ENCODE measurements at regions of chrX and their contacts with region 1.

Region 1: DNA sequence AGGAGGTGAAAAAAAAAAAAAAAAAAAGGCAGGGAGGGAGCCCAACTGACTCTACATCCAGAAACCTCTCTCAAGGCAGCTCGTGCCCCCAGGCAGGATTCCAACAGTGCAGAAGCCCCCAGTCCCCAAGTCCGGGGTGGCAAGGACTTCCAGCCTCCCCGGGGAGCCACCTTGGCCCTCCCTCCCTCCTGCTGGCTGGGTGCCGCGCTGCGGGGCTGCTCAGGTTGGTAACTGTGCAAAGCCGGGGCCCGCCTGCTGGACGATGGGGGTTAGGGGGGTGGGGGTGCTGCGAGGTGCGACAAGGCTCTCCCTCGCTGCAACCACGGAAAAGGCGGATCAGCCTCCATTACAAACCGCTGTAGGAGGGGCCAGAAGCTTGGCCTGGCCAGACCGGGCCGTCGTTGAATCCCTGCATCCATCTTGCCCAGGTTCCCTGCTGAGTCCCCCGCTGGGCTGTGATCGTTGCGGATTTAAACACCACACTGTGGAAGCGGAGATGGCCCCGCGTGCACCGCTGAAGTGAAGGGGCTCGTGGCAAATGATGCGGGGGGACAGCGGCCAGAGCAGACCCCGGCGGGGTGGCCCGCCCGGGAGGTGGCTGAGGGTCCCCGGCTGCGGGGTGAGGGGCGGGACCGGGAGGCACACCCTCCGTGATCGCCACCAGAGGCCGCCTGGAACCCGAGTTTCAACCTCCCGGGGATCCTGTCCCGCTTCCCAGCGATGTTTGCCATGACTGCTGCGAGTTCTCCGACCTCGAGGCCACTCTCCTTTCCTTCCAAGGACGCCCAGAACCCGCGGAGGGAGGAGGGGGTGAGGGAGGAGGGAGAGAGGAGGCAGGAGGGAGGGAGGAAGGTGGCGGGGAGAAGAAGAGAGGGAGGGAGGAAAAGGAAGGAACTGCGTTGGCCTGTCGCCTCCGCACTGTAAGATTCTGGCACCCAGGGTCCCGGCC is 58.0 kb upstream of the DDX3X start:
- DNase-seq: peak; percentile 62
- H3K4me3 ChIP-seq: peak overlapping the region; percentile 25 to 57 (median 32)
- H3K27ac ChIP-seq: peak overlapping the region; percentile 40 to 74 (median 70)
- H3K4me1 ChIP-seq: peaks cover 4 to 12% (median 7%) of the 10 kb centered on the region in 4 donors
- H3K27me3 ChIP-seq: no peaks in the 10 kb centered on the region
- CTCF ChIP-seq: peak; percentile 14 to 41 (median 34)
- EP300 ChIP-seq: no peak
- POLR2A ChIP-seq: no peak

Region 2: DNA sequence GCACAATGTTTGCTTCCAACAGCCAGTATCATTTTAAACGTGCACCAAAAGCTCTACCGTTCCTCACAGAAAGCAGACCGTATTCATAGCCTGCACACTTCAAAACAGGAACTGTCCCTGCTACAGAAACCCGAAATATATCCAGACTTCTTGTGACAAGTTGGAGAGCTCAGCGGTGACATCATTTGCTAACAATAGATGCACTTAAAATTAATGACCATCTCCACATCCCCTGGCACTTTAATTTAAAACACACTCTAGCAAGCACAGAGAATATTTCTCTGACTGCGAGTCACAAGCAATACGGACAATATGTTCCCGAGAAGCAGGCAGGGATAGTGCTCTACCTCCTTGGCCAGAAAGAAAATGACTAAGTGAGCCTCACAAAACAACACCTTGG is 173.7 kb after region 1 on chrX:
- in situ Hi-C with region 1: no loop called
- intact Hi-C with region 1: no loop called
- DNase-seq: no peak
- H3K4me3 ChIP-seq: no peak overlapping the region
- H3K27ac ChIP-seq: peak overlapping the region; percentile 13 to 59 (median 34)
- H3K4me1 ChIP-seq: peaks cover 0 to 3% (median 0%) of the 10 kb centered on the region in 4 donors
- H3K27me3 ChIP-seq: no peaks in the 10 kb centered on the region
- CTCF ChIP-seq: no peak
- EP300 ChIP-seq: no peak
- POLR2A ChIP-seq: no peak

Region 3: DNA sequence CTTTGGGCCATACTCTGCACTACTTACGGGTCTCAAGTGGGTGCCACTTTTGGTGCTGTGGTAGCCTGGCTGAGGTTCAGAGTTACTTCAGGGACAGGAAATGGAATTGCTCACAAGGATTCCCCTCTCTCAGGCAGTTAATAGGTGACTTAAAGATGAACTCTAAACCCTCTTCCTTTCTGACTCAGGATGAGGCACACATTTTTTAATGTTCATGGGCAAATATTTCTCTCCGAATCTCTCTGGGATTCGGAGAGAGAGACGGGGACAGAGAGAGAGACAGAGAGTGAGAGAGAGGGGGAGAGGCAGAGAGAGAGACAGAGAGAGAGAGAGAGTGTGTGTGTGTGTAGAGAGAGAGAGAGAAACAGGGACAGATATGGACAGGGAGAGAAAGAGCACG is 251.0 kb after region 1 on chrX:
- in situ Hi-C with region 1: no loop called
- intact Hi-C with region 1: no loop called
- DNase-seq: no peak
- H3K4me3 ChIP-seq: no peak overlapping the region
- H3K27ac ChIP-seq: no peak overlapping the region
- H3K4me1 ChIP-seq: no peaks in the 10 kb centered on the region
- H3K27me3 ChIP-seq: no peaks in the 10 kb centered on the region
- CTCF ChIP-seq: no peak
- EP300 ChIP-seq: no peak
- POLR2A ChIP-seq: no peak

Region 4: GRCh38 chrX:41759817-41760216 is 483.9 kb after region 1 on chrX:
- in situ Hi-C with region 1: loop called in 1 of 4 experiments (anchors 25 kb)
- intact Hi-C with region 1: no loop called
- DNase-seq: no peak
- H3K4me3 ChIP-seq: no peak overlapping the region
- H3K27ac ChIP-seq: no peak overlapping the region
- H3K4me1 ChIP-seq: no peaks in the 10 kb centered on the region
- H3K27me3 ChIP-seq: no peaks in the 10 kb centered on the region
- CTCF ChIP-seq: peak in 4 of 5 experiments; percentile 19 to 40 (median 30)
- EP300 ChIP-seq: no peak
- POLR2A ChIP-seq: no peak

Measured in transverse colon (tissue), 4 donors.